ENCODE measurements at regions of chr14 and their contacts with region 1.

Region 1: DNA sequence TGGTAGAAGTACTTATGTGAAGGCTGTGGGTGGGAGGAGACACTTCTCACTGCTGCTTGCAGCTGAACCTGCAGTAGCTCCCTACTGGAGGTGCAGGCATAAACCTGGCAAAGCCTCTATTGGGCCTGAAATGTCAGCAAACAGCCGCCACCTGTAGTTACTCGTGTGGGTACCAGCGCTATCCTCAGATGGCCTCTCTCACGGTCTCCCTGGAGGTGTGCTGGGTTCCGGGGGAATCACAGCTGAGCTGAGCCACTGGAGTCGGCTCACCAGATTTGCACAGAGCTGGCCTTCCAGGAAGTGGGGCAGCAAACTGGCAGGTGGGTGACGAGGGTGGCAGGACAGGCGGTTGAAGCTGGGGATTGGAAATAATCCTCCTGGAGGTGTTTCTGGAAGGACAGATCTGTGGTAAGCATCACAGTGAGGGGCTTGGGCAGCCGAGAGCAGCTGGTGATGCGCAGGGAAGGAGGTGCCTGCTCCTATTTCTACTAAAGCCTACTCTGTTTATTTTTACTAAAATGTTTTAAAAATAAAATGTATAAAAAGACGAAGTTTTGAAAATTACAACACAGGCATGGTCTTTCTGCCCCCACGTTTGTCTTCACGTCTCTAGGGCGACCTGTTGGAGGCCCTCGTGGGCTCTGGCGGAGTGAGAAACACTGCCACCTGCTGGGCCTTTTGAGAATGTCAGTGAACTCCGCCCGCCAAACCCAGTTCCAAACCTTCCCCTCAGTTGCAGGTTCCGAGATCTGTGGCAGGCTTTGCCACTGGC is 67.8 kb upstream of the PLEKHG3 start:
- DNase-seq: peak; percentile 53 to 89
- H3K4me3 ChIP-seq: no peak overlapping the region
- H3K27ac ChIP-seq: no peak overlapping the region
- H3K4me1 ChIP-seq: peaks cover 0 to 8% (median 4%) of the 10 kb centered on the region in 4 experiments; a peak in 4 of 7 replicates
- H3K27me3 ChIP-seq: no peaks in the 10 kb centered on the region
- CTCF ChIP-seq: peak; percentile 84 to 93 (median 85)
- EP300 ChIP-seq: no peak
- POLR2A ChIP-seq: no peak
- RAD21 ChIP-seq: peak; percentile 81 to 87

Region 2: GRCh38 chr14:64400829-64401459 is 235.4 kb before region 1 on chr14:
- CTCF ChIA-PET with region 1: no interaction called
- POLR2A ChIA-PET with region 1: no interaction called
- DNase-seq: no peak
- H3K4me3 ChIP-seq: no peak overlapping the region
- H3K27ac ChIP-seq: no peak overlapping the region
- H3K4me1 ChIP-seq: no peaks in the 10 kb centered on the region; a peak in 1 of 7 replicates
- H3K27me3 ChIP-seq: no peaks in the 10 kb centered on the region
- CTCF ChIP-seq: no peak
- EP300 ChIP-seq: no peak
- POLR2A ChIP-seq: no peak
- RAD21 ChIP-seq: no peak

Region 3: GRCh38 chr14:64478634-64479250 is 157.7 kb before region 1 on chr14:
- CTCF ChIA-PET with region 1: interaction called, 13 read pairs
- POLR2A ChIA-PET with region 1: no interaction called
- DNase-seq: no peak
- H3K4me3 ChIP-seq: no peak overlapping the region
- H3K27ac ChIP-seq: no peak overlapping the region
- H3K4me1 ChIP-seq: no peaks in the 10 kb centered on the region
- H3K27me3 ChIP-seq: no peaks in the 10 kb centered on the region
- CTCF ChIP-seq: no peak
- EP300 ChIP-seq: no peak
- POLR2A ChIP-seq: no peak
- RAD21 ChIP-seq: no peak; a peak in 1 of 4 replicates

Region 4: GRCh38 chr14:64540208-64541157 is 95.9 kb before region 1 on chr14 and contains the start of gene HSPA2:
- CTCF ChIA-PET with region 1: interaction called, 14 read pairs
- POLR2A ChIA-PET with region 1: interaction called, 10 read pairs
- DNase-seq: peak; percentile 98 to 99
- H3K4me3 ChIP-seq: peak within 1 kb of the TSS; percentile 47 to 75 (median 58)
- H3K27ac ChIP-seq: peak within 1 kb of the TSS; percentile 90
- H3K4me1 ChIP-seq: peaks cover 0 to 21% (median 3%) of the 10 kb centered on the region in 4 experiments; a peak in 4 of 7 replicates
- H3K27me3 ChIP-seq: peaks cover 0 to 3% (median 0%) of the 10 kb centered on the region in 4 experiments; a peak in 1 of 7 replicates
- CTCF ChIP-seq: peak; percentile 73 to 85 (median 83)
- EP300 ChIP-seq: no peak
- POLR2A ChIP-seq: peak; percentile 79 to 97
- RAD21 ChIP-seq: peak; percentile 63 to 73
- total RNA-seq, gene HSPA2: 82.9 and 91.1 TPM in 2 replicates

Region 5: DNA sequence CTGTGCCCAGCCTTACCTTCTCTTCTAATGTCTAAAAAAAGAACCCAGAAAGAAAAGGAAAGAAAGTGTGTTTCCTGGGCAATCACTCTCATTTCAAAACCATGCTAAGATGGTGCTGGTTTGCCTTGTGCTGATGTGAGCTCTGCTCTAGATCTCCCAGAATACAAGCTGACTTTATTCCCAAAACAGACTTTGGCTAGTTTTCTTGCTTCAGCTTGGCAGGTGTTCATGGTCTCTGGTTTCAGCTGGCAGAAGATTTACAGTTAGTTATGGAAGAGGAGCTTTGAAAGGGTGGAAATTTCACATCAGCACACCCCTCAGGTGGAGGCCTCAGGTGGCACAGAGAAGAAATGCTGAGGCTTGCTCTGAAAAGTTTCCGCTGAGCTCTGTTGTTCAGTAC is 52.2 kb before region 1 on chr14:
- CTCF ChIA-PET with region 1: interaction called, 14 read pairs
- POLR2A ChIA-PET with region 1: no interaction called
- DNase-seq: no peak
- H3K4me3 ChIP-seq: no peak overlapping the region
- H3K27ac ChIP-seq: no peak overlapping the region
- H3K4me1 ChIP-seq: peaks cover 3 to 14% (median 6%) of the 10 kb centered on the region in 4 experiments; a peak in 4 of 7 replicates
- H3K27me3 ChIP-seq: no peaks in the 10 kb centered on the region
- CTCF ChIP-seq: no peak
- EP300 ChIP-seq: no peak
- POLR2A ChIP-seq: no peak
- RAD21 ChIP-seq: no peak

Region 6: GRCh38 chr14:64612021-64612380 is 24.4 kb before region 1 on chr14:
- CTCF ChIA-PET with region 1: interaction called, 19 read pairs
- POLR2A ChIA-PET with region 1: no interaction called
- DNase-seq: no peak
- H3K4me3 ChIP-seq: no peak overlapping the region
- H3K27ac ChIP-seq: no peak overlapping the region
- H3K4me1 ChIP-seq: peaks cover 0 to 2% (median 0%) of the 10 kb centered on the region in 4 experiments; a peak in 2 of 7 replicates
- H3K27me3 ChIP-seq: no peaks in the 10 kb centered on the region
- CTCF ChIP-seq: no peak
- EP300 ChIP-seq: no peak
- POLR2A ChIP-seq: no peak
- RAD21 ChIP-seq: no peak

Region 7: DNA sequence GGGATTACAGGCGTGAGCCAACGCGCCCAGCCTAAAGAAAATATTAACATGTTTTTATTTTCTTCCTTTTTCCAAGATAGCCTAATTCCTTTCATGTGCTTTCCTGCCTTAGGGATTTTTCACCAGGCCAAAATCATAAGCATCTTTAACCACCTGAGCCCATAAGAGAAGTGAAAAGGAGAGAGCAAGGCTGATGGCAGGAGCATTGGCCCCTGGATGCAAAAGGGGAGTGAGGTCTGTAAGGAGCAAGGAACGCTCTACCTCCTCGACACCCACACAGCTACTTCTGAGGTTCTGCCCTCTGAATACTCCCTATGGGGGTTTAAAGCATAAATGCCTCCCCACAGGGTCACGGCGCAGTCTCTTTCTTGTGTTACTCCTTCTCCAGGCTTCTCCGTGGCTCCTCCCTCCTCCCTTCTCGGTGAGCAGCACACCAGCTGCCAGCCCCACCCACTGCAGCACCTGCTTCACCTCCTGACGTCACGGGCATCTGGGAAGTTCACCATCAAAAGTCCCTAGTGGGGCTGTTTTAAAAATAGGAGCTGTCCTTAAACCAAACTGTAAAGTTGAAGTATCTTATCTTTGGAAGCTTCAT is 175.9 kb after region 1 on chr14:
- CTCF ChIA-PET with region 1: no interaction called
- POLR2A ChIA-PET with region 1: no interaction called
- DNase-seq: peak in 1 of 2 experiments; percentile 71
- H3K4me3 ChIP-seq: peak overlapping the region in 1 of 4 experiments; percentile 19; a peak in 1 of 8 replicates
- H3K27ac ChIP-seq: no peak overlapping the region
- H3K4me1 ChIP-seq: no peaks in the 10 kb centered on the region; a peak in 1 of 7 replicates
- H3K27me3 ChIP-seq: no peaks in the 10 kb centered on the region; a peak in 1 of 7 replicates
- CTCF ChIP-seq: no peak
- EP300 ChIP-seq: no peak
- POLR2A ChIP-seq: no peak
- RAD21 ChIP-seq: no peak

Region 8: DNA sequence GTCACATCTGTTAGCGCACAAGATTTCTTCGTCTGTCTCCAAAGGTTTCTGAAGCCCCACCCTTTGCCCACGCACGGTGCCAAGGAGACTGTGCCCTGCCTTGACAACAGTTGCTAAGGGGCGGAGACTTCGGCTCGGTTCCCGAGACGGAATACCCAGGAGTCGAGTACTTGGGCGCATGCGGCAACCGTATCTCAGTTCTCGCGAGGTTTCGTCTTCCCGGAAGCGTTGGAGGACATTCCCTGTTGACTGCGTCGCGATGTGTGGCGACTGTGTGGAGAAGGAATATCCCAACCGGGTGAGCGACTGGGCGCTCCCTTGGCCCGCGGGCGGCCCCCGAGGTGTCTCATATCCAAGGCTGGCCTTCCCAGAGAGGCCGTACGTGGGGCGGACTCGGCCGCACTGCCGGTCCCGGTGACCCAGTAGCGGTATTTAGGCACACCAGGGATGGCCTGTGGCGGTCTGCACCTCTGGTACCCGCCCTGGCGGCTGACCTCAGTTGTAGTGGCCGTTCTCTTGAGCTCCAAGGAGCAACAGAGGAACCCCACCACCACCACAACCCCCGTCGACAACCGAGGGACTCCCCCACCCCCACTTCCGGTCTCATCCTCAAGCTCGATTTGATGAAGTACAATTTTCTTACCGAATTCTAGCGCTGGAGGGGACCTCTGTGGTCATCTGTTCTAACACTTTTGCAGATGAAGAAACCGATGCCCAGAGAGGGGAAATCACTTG is 278.0 kb after region 1 on chr14 and contains the start of gene CHURC1:
- CTCF ChIA-PET with region 1: no interaction called
- POLR2A ChIA-PET with region 1: no interaction called
- DNase-seq: peak; percentile 89 to 96
- H3K4me3 ChIP-seq: peak within 1 kb of the TSS; percentile 75 to 90 (median 89)
- H3K27ac ChIP-seq: peak within 1 kb of the TSS; percentile 86
- H3K4me1 ChIP-seq: peaks cover 0 to 4% (median 3%) of the 10 kb centered on the region in 4 experiments; a peak in 4 of 7 replicates
- H3K27me3 ChIP-seq: no peaks in the 10 kb centered on the region
- CTCF ChIP-seq: peak in 1 of 3 experiments; percentile 9; a peak in 1 of 4 replicates
- EP300 ChIP-seq: no peak
- POLR2A ChIP-seq: peak in 1 of 2 experiments; percentile 97; a peak in 2 of 3 replicates
- RAD21 ChIP-seq: 0 out of 4 replicates have a peak, but pooled peaks of 1 of the 2 experiments have one; percentile 4
- total RNA-seq, gene CHURC1: 50.2 and 55.6 TPM in 2 replicates

Region 9: DNA sequence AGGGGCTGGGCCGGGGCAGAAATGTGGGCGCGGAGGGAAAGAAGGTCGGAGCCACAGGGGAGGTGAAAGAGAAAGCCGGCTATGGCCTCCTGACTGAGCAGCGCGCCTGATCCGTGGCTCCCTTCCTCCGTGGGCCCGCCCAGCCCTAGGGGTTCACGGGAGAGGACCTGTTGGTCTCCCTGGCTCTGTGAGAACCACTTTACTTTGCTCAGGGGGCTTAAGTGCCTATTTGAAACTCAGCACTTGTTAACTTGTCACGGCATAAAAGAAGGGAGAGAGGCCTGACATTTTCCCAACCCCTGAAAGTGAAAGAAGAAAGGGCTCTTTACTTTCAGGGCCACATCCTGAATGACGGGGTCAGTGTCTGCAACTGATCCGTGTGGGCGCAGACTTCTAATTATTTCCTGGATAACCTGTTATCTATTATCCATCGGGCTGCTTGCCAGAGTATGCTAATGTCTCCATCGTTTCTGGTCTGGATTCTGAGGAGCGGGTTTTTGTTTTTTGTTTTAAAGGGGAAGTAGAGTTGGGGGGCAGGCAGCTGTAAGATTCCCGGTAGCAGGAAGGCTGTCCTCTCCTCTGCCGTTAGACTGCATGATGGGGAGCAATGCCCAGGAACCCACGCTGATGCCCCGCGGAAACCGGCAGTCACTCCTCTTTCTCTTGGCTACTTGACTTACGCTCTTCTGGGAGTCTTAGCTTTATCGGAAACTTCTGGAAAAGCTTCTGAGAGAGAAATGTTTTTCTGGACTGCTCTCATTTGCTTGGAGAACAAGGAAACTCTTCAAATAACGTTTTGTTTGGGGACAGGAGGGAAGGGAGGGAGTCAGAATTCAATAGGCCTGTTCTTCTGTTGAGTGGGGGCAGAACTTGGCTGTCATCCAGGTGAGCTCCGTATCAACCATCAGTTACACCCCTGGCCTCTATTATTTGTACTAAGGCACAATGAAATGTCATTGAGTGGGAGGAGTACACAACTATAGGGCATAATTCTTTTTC is 593.7 kb after region 1 on chr14:
- CTCF ChIA-PET with region 1: no interaction called
- POLR2A ChIA-PET with region 1: no interaction called
- DNase-seq: peak in 1 of 2 experiments; percentile 65
- H3K4me3 ChIP-seq: peak overlapping the region in 1 of 4 experiments; percentile 40; a peak in 2 of 8 replicates
- H3K27ac ChIP-seq: peak overlapping the region; percentile 46; the same call in 1 of the 2 replicates
- H3K4me1 ChIP-seq: peaks cover 4 to 18% (median 11%) of the 10 kb centered on the region in 4 experiments; a peak in 4 of 7 replicates
- H3K27me3 ChIP-seq: no peaks in the 10 kb centered on the region
- CTCF ChIP-seq: no peak
- EP300 ChIP-seq: no peak
- POLR2A ChIP-seq: 0 out of 3 replicates have a peak, but pooled peaks of 1 of the 2 experiments have one; percentile 27
- RAD21 ChIP-seq: no peak

Measured in H1 (cell line).